Psoas muscle (tissue), 8 donors: ENCODE measurements at regions of chr16 and their contacts with region 1.

Region 1: DNA sequence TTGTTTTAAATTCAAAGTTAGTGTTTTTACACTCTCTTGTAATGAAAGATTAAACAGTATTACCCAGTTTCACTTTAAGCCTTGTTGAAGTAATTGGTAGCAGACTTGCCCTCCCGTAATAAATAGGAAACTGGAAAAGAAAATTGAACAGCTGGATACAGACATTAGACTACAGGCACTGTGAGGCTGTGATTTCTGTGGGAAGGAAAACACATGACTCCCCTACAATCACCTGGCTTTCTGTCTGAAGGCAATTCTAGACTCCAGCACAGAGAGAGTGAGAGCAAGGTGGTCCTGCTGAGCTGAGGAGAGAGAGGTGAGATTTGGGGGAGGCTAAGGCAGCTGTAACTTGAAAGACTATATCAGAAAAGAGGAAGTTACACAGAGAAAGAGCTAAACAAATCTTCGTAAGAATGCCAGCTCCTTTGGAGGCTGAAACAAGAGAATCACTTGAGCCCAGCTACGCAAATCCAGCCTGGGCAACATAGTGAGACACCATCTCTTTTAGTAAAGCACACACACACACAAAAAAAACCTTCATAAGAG is 57.8 kb upstream of the CDYL2 start:
- DNase-seq: no peak
- ATAC-seq: no peak
- H3K4me3 ChIP-seq: no peak overlapping the region
- H3K27ac ChIP-seq: no peak overlapping the region
- H3K4me1 ChIP-seq: no peaks in the 10 kb centered on the region
- H3K27me3 ChIP-seq: no peaks in the 10 kb centered on the region
- CTCF ChIP-seq: no peak

Region 2: GRCh38 chr16:80766798-80767197 is 95.4 kb before region 1 on chr16:
- intact Hi-C with region 1: no loop called
- DNase-seq: no peak
- ATAC-seq: no peak
- H3K4me3 ChIP-seq: no peak overlapping the region
- H3K27ac ChIP-seq: no peak overlapping the region
- H3K4me1 ChIP-seq: no peaks in the 10 kb centered on the region
- H3K27me3 ChIP-seq: no peaks in the 10 kb centered on the region
- CTCF ChIP-seq: no peak

Region 3: GRCh38 chr16:80883159-80883642 is 21.0 kb after region 1 on chr16:
- intact Hi-C with region 1: no loop called
- DNase-seq: no peak
- ATAC-seq: no peak
- H3K4me3 ChIP-seq: no peak overlapping the region
- H3K27ac ChIP-seq: no peak overlapping the region
- H3K4me1 ChIP-seq: no peaks in the 10 kb centered on the region
- H3K27me3 ChIP-seq: no peaks in the 10 kb centered on the region
- CTCF ChIP-seq: no peak

Region 4: DNA sequence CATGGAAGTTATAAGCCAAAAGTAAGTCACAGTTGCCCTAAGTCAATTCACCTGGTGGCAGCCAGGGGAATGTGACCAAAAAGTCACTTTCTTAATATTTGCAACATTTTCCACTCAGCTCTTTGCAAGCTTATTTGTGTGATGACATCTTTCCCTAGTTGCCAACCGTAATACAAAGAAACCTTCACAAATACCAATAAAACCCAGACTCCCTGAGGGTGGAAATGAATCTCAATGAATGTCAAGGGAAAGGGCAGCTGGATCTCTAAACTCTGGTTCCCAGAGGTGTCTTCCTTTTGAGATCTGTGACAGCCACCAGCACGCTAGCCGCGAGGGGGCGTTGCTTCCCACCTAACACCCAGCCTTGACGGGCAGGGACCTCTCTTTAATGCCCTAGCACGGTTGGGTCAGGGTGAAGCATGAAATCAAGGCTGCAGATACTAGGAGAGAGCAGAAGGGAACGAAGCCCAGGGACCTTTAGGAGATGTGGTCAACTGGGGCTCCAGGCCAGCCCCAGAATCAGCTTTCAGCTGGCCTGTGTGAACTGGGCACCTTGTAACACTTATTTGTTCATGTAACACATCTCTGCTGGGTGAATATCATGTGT is 62.2 kb after region 1 on chr16:
- intact Hi-C with region 1: loop called in 1 of 2 experiments (anchors 10 kb)
- DNase-seq: peak; percentile 32 to 70
- ATAC-seq: peak in 3 of 4 donors; percentile 42 to 58 (median 55)
- H3K4me3 ChIP-seq: no peak overlapping the region
- H3K27ac ChIP-seq: no peak overlapping the region
- H3K4me1 ChIP-seq: no peaks in the 10 kb centered on the region
- H3K27me3 ChIP-seq: no peaks in the 10 kb centered on the region
- CTCF ChIP-seq: peak; percentile 32